ENCODE measurements at regions of chr1 and their contacts with region 1.

Region 1: GRCh38 chr1:9145021-9145668 is 16.2 kb upstream of the GPR157 start:
- DNase-seq: no peak
- ATAC-seq: no peak
- H3K4me3 Mint-ChIP-seq: no peak overlapping the region
- H3K27ac Mint-ChIP-seq: no peak overlapping the region
- H3K4me1 Mint-ChIP-seq: peaks cover 7% of the 10 kb centered on the region; the same call in 1 of the 2 replicates
- H3K27me3 Mint-ChIP-seq: no peaks in the 10 kb centered on the region
- CTCF ChIP-seq: no peak

Region 2: GRCh38 chr1:9128520-9129265 is 16.5 kb before region 1 on chr1 and contains the start of gene GPR157:
- CTCF ChIA-PET with region 1: interaction called, 33 read pairs
- POLR2A ChIA-PET with region 1: interaction called, 3 read pairs
- DNase-seq: peak; percentile 87
- ATAC-seq: peak; percentile 89
- H3K4me3 Mint-ChIP-seq: peak within 1 kb of the TSS; percentile 86
- H3K27ac Mint-ChIP-seq: no peak within 1 kb of the TSS; the same call in 1 of the 2 replicates
- H3K4me1 Mint-ChIP-seq: peaks cover 18% of the 10 kb centered on the region
- H3K27me3 Mint-ChIP-seq: peaks cover 14% of the 10 kb centered on the region
- CTCF ChIP-seq: no peak
- total RNA-seq, gene GPR157: 3.4 to 9.6 TPM (median 6.0 TPM) in 3 replicates

Region 3: DNA sequence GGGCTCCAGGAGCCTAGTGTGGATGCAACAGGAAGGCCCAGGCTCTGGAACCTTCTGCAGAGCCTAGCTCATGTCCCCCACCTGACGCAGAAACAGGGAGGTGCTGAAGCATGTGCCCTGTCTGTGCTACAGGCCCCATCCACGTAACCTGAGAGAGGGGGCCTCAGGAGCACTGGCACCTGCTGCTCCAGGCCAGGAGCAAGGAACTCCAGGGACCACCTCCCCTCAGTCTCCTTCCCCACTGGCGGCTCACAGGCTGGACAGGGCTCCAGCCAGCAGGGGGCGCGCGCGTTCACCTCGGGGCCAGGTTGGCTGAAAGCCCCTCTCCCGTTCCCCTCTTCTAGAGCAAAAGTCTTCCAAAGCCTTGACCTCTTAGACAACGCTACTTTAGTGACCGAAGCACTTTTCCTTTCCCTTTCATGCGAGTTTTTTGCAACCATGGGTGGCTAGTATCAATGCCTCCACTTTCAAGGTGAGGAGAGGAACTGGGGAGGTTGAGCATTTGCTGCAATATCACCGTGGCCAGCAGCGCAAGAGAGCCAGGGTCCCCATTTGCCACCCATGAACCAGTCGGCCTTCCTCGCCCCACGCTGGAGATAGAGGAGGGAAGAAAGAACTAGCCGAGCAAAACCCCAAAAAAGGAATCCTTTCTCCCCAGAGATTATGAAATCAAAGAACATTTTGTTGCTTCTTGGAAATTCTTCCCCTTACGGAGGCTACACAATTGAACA is 36.2 kb after region 1 on chr1:
- CTCF ChIA-PET with region 1: interaction called, 21 read pairs
- POLR2A ChIA-PET with region 1: no interaction called
- DNase-seq: peak; percentile 89
- ATAC-seq: peak; percentile 74
- H3K4me3 Mint-ChIP-seq: peak overlapping the region; percentile 90
- H3K27ac Mint-ChIP-seq: peak overlapping the region; percentile 95
- H3K4me1 Mint-ChIP-seq: peaks cover 48% of the 10 kb centered on the region
- H3K27me3 Mint-ChIP-seq: peaks cover 14% of the 10 kb centered on the region
- CTCF ChIP-seq: peak; percentile 96

Region 4: DNA sequence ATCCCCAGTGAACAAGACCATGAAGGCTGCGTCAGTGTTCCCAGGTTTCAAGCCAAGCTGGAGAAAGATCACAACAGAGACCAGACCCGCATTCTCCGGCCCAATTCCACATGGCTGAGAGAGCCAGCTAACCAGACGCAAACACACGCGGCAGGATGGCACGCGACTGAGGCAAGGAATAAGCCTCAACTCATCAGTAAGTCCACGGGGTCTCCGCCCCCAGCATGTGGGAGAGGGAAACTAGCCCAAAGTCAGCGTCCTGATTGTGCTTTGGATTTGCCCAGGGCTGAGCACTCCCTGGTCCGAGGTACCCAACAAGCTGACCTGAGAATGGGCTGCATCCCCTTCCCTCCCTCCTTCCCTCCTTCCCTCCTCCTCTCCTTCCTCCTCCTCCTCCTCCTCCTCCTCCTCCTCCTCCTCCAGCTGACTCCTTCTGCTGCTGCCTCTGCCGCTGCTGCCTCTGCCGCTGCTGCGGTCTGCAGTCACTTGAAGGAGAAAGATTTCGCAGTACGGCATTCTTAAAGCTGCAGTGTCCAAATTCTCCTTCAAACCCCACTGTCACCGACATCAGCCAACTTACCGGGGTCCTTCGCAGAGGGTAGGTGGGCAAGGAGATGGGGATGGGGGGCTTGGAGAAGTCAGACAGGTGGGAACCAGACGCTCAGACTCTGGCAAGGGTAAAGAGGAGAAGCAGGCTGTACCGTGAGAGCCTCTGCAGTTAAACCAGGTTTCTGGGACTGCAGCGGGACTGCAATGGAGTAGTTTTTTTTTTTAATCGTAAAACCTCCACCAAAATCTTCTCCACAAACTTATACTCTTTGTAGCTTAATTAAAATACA is 56.5 kb after region 1 on chr1:
- CTCF ChIA-PET with region 1: interaction called, 29 read pairs
- POLR2A ChIA-PET with region 1: no interaction called
- DNase-seq: no peak
- ATAC-seq: no peak
- H3K4me3 Mint-ChIP-seq: peak overlapping the region; percentile 57
- H3K27ac Mint-ChIP-seq: no peak overlapping the region
- H3K4me1 Mint-ChIP-seq: peaks cover 28% of the 10 kb centered on the region
- H3K27me3 Mint-ChIP-seq: peaks cover 81% of the 10 kb centered on the region
- CTCF ChIP-seq: no peak

Region 5: GRCh38 chr1:9249534-9250410 is 104.6 kb after region 1 on chr1:
- CTCF ChIA-PET with region 1: interaction called, 16 read pairs
- POLR2A ChIA-PET with region 1: interaction called, 3 read pairs
- DNase-seq: peak; percentile 80
- ATAC-seq: peak; percentile 80
- H3K4me3 Mint-ChIP-seq: no peak overlapping the region
- H3K27ac Mint-ChIP-seq: no peak overlapping the region
- H3K4me1 Mint-ChIP-seq: peaks cover 42% of the 10 kb centered on the region
- H3K27me3 Mint-ChIP-seq: no peaks in the 10 kb centered on the region
- CTCF ChIP-seq: peak; percentile 72

Region 6: GRCh38 chr1:10178597-10179405 is 1033.7 kb after region 1 on chr1:
- CTCF ChIA-PET with region 1: no interaction called
- POLR2A ChIA-PET with region 1: no interaction called
- DNase-seq: peak; percentile 23
- ATAC-seq: peak; percentile 65
- H3K4me3 Mint-ChIP-seq: no peak overlapping the region
- H3K27ac Mint-ChIP-seq: peak overlapping the region; percentile 72
- H3K4me1 Mint-ChIP-seq: peaks cover 7% of the 10 kb centered on the region
- H3K27me3 Mint-ChIP-seq: no peaks in the 10 kb centered on the region
- CTCF ChIP-seq: no peak

Measured in WTC11 (cell line).